Mammary epithelial cell (primary cell): ENCODE measurements at regions of chrX and their contacts with region 1.

Region 1: GRCh38 chrX:45505214-45505613 is 304.5 kb upstream of the DIPK2B start:
- DNase-seq: peak; percentile 91
- H3K4me3 ChIP-seq: peak overlapping the region in 1 of 3 experiments; percentile 3
- H3K27ac ChIP-seq: peak overlapping the region; percentile 92
- H3K4me1 ChIP-seq: peaks cover 38% of the 10 kb centered on the region
- H3K27me3 ChIP-seq: no peaks in the 10 kb centered on the region
- CTCF ChIP-seq: no peak

Region 2: DNA sequence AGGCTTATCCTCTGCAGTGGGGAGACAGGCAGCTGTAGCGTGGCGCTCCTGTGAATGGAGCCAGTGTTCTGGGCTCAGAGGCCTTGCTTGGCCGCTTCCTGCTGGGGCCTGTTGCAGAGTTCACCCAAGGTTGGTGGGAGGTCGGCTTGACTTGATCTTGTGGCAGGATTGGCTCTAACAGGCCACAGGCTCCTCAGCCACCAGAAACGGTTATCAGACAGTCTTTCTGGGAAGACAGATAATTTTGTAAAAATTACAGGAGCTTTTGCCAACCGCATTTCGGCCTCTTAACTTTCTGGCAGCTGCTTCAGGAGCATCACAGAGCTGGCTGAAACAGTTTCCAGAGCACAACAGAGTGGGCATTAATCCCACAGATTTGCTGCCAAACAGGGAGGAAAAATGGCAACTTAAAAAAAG is 370.9 kb before region 1 on chrX:
- CTCF ChIA-PET with region 1: no interaction called
- dilution Hi-C with region 1: no loop called
- in situ Hi-C with region 1: no loop called
- intact Hi-C with region 1: no loop called
- DNase-seq: no peak
- H3K4me3 ChIP-seq: no peak overlapping the region
- H3K27ac ChIP-seq: no peak overlapping the region
- H3K4me1 ChIP-seq: no peaks in the 10 kb centered on the region
- H3K27me3 ChIP-seq: peaks cover under 1% of the 10 kb centered on the region
- CTCF ChIP-seq: no peak

Region 3: DNA sequence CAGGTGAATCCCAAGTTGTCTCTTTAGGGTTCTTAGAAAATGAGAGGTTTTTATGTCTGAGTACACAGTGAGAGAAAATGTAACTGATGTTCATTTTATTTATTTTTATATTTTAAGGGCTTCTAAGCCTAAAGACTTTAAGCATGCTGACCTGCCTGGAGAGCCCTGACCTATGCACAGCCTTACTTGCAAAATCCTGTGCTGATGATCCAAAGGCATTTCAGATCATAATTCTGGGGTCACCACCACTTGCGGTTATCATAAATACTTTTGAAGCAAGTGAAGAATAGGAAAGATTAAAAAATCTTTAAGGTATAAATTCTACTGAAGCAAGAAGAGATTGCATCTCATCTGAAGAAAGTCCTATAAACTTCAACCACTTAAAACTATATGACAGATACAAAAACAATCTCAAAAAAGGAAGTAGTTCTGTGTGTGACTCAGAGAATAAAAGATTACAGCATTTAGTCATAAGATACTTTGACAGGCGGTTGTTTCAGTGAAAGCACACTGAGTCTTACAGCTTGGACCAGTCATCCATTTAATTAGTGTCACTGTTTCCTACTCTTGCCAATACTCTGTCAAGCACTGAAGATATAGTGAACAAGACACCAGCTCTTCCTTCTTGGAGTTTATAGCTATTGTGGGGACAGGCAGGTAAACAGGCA is 59.3 kb before region 1 on chrX:
- CTCF ChIA-PET with region 1: no interaction called
- dilution Hi-C with region 1: no loop called
- in situ Hi-C with region 1: no loop called
- intact Hi-C with region 1: loop called (anchors 5 kb)
- DNase-seq: peak; percentile 91
- H3K4me3 ChIP-seq: no peak overlapping the region
- H3K27ac ChIP-seq: peak overlapping the region; percentile 24
- H3K4me1 ChIP-seq: peaks cover 32% of the 10 kb centered on the region
- H3K27me3 ChIP-seq: no peaks in the 10 kb centered on the region
- CTCF ChIP-seq: no peak

Region 4: DNA sequence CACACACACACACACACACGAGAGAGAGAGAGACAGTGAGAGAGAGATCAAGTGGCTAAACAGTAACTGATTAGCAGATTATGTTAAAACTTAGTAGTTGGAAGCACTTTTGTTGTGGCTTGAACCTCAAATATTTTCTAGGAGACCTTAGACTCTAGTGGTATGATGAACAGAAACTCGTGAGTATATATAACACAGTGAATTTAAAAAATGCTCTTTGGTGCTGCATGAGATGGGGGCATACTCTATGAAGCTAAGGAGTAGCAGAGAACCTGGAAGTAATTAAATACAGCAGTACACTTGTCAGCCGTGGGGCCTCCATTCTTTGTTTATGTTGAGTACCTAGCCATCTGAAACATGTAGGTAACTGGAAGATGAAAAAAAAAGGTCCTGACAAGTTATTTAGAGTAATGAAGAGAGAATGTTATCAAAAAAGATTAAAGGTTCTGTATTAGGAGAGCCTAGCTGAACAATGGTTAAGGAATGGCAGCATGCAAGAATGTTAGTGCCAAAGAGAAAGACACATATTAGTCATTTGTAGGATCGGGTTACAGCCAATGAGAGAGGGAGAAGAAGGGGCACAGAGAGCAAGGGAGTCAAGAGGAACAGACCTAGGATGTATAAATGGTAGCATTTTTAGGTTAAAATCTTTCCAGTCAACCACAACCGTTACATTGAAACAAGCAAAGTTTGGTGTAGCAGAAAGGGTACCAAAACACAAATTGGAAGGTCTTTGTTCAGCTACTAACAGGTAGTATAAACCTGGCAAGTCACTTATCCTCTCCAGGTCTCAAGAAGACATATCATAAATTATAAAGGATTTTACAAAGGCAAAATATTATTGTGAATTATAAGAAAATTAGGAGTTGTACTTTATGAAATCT is 12.1 kb after region 1 on chrX:
- CTCF ChIA-PET with region 1: no interaction called
- dilution Hi-C with region 1: no loop called
- in situ Hi-C with region 1: no loop called
- intact Hi-C with region 1: no loop called
- DNase-seq: peak; percentile 70
- H3K4me3 ChIP-seq: no peak overlapping the region
- H3K27ac ChIP-seq: peak overlapping the region; percentile 93
- H3K4me1 ChIP-seq: peaks cover 33% of the 10 kb centered on the region
- H3K27me3 ChIP-seq: no peaks in the 10 kb centered on the region
- CTCF ChIP-seq: no peak